BJ (cell line): ENCODE measurements at regions of chr2 and their contacts with region 1.

Region 1: DNA sequence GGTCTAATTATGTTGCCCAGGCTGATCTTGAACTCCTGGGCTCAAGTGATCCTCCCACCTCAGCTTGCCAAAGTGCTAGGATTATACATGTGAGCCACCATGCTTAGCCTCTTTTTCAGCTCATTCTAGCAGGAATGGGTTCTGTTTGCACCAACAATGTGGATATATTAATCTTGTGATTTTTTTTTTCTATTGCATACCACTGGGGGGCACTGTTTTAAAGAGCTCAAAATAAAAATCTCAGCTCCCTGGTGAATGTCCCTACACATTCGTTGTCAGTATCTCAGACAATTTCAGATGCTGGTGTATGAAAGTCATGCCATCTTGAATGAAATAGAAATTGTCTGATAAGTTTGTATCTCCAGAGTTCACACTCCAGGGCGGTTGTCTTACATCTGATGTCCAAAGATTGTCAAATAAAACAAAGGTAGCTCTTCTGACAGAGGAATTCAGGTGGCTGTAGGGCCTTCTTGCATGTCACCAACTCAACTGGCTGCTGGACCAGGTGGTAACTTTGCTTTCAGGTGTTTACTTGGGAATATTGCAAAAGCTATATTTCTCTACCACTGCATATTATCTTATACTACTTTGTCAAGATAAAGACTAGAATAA is 3.1 kb upstream of the MATN3 start:
- DNase-seq: no peak
- H3K4me3 ChIP-seq: no peak overlapping the region
- H3K27me3 ChIP-seq: peaks cover 4% of the 10 kb centered on the region
- CTCF ChIP-seq: peak; percentile 50

Region 2: GRCh38 chr2:19971691-19972090 is 43.9 kb before region 1 on chr2:
- CTCF ChIA-PET with region 1: interaction called, 17 read pairs
- POLR2A ChIA-PET with region 1: no interaction called
- DNase-seq: no peak
- H3K4me3 ChIP-seq: no peak overlapping the region
- H3K27me3 ChIP-seq: no peaks in the 10 kb centered on the region
- CTCF ChIP-seq: no peak

Region 3: DNA sequence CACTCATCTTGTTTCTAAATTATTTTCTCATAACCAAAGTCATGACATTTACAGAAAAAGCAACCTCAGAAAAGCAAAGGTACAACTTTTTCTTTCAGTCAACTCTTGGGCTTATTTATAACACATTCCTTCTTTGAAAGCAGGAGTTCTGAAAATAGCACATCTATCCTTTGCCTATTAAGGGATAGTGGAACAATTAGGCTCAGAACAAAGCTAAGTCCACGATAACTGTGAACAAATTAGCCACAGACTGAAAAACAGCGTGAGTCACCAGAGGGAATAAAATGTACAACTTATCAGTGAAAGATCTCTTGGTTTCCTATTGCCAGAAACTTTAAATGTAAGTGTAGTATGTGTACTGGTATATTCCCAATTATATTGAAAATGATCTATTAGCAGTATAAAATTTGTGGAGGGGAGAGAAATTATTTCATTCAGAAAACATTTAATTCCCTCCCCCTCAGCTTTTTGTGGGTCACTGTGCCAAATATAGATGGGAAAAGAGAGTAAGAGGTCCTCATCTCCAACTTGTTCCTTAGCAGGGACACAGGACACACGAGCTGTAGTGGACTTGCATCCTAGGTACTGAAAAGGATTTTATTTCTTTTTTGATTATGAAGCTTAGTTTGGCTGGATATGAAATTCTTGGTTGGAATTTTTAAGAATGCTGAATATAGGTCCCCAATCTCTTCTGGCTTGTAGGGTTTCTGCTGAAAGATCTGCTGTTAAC is 12.3 kb after region 1 on chr2:
- CTCF ChIA-PET with region 1: interaction called, 21 read pairs
- POLR2A ChIA-PET with region 1: interaction called, 8 read pairs
- DNase-seq: no peak
- H3K4me3 ChIP-seq: no peak overlapping the region
- H3K27me3 ChIP-seq: no peaks in the 10 kb centered on the region
- CTCF ChIP-seq: no peak

Region 4: GRCh38 chr2:20042531-20042930 is 27.0 kb after region 1 on chr2:
- CTCF ChIA-PET with region 1: interaction called, 12 read pairs
- POLR2A ChIA-PET with region 1: interaction called, 3 read pairs
- DNase-seq: no peak
- H3K4me3 ChIP-seq: no peak overlapping the region
- H3K27me3 ChIP-seq: no peaks in the 10 kb centered on the region
- CTCF ChIP-seq: no peak

Region 5: GRCh38 chr2:20067992-20068584 is 52.5 kb after region 1 on chr2:
- CTCF ChIA-PET with region 1: interaction called, 15 read pairs
- POLR2A ChIA-PET with region 1: no interaction called
- DNase-seq: peak; percentile 98
- H3K4me3 ChIP-seq: no peak overlapping the region
- H3K27me3 ChIP-seq: no peaks in the 10 kb centered on the region
- CTCF ChIP-seq: no peak

Region 6: GRCh38 chr2:20103514-20104112 is 88.0 kb after region 1 on chr2:
- CTCF ChIA-PET with region 1: interaction called, 24 read pairs
- POLR2A ChIA-PET with region 1: no interaction called
- DNase-seq: no peak
- H3K4me3 ChIP-seq: no peak overlapping the region
- H3K27me3 ChIP-seq: no peaks in the 10 kb centered on the region; the same call in 1 of the 2 replicates
- CTCF ChIP-seq: peak; percentile 35